ENCODE measurements at regions of chr21 and their contacts with region 1.

Region 1: DNA sequence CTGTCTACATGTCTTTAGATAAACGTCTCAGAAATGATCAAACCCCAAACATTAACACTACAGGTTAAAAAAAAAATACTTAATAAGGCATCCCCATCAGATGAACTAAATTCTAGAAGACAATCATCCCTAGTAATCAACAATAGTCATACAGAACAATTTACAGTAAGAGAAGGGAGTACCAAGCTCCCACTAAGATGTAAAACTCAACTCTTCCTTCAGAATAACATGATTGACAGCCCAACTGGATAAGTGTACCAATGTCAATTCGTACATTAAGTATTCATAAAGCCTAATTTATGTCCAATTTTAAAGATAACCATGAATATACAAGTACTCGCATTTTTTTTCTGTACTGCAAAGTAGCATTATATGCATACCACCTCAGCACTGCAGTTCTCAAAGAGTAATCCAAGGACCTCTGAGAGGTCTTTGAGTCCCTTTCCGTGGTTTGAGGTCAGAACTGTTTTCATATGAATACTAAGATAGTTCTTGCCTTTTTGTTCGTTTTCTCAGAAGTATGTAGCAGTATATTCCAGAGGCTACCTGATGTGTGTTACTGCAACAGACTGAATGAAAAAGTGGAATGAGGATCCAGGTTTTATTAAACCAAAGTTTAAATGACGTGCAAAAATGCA is 6.6 kb downstream of the SCAF4 start:
- DNase-seq: no peak
- ATAC-seq: no peak
- H3K4me3 ChIP-seq: no peak overlapping the region
- H3K4me3 Mint-ChIP-seq: peak overlapping the region; percentile 21
- H3K27ac ChIP-seq: no peak overlapping the region
- H3K27ac Mint-ChIP-seq: peak overlapping the region; percentile 57
- H3K4me1 ChIP-seq: peaks cover 38% of the 10 kb centered on the region
- H3K4me1 Mint-ChIP-seq: peaks cover 52% of the 10 kb centered on the region
- H3K27me3 ChIP-seq: no peaks in the 10 kb centered on the region
- H3K27me3 Mint-ChIP-seq: no peaks in the 10 kb centered on the region
- CTCF ChIP-seq: no peak

Region 2: DNA sequence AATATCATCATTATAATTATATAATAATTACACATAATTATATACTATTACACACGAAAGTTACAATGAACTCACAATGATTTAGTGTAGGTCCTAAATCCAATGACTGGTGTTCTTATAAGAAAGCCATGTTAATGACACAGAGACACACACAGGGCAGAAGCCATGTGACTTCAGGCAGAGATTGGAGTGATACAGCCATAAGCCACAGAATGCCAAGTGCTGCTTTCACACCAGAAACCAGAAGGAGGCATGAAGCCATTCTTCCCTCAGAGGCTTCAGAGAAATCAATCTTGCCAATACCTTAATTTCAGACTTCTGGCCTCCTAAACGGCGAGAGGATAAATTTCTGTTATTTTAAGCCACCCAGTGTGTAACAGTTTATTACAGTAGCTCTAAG is 539.7 kb before region 1 on chr21:
- CTCF ChIA-PET with region 1: no interaction called
- POLR2A ChIA-PET with region 1: no interaction called
- intact Hi-C with region 1: loop called in 1 of 2 experiments (anchors 5 kb)
- DNase-seq: peak in 6 of 14 experiments; percentile 22 to 66 (median 50)
- ATAC-seq: peak; percentile 27
- H3K4me3 ChIP-seq: peak overlapping the region; percentile 56
- H3K4me3 Mint-ChIP-seq: peak overlapping the region; percentile 85
- H3K27ac ChIP-seq: peak overlapping the region; percentile 64 to 75
- H3K27ac Mint-ChIP-seq: peak overlapping the region; percentile 97
- H3K4me1 ChIP-seq: peaks cover 76% of the 10 kb centered on the region
- H3K4me1 Mint-ChIP-seq: peaks cover 85% of the 10 kb centered on the region
- H3K27me3 ChIP-seq: no peaks in the 10 kb centered on the region
- H3K27me3 Mint-ChIP-seq: no peaks in the 10 kb centered on the region
- CTCF ChIP-seq: no peak

Region 3: GRCh38 chr21:31798842-31799704 is 73.8 kb after region 1 on chr21:
- CTCF ChIA-PET with region 1: no interaction called
- POLR2A ChIA-PET with region 1: no interaction called
- intact Hi-C with region 1: no loop called
- DNase-seq: no peak
- ATAC-seq: no peak
- H3K4me3 ChIP-seq: no peak overlapping the region
- H3K4me3 Mint-ChIP-seq: no peak overlapping the region
- H3K27ac ChIP-seq: no peak overlapping the region
- H3K27ac Mint-ChIP-seq: no peak overlapping the region
- H3K4me1 ChIP-seq: no peaks in the 10 kb centered on the region
- H3K4me1 Mint-ChIP-seq: no peaks in the 10 kb centered on the region
- H3K27me3 ChIP-seq: peaks cover 3 to 9% of the 10 kb centered on the region in 2 experiments
- H3K27me3 Mint-ChIP-seq: peaks cover 34% of the 10 kb centered on the region
- CTCF ChIP-seq: no peak

Measured in CD4-positive, alpha-beta T cell (primary cell).